SK-N-SH (cell line): ENCODE measurements at regions of chr19 and their contacts with region 1.

Region 1: GRCh38 chr19:2455851-2456570 is 748 bp downstream of the LMNB2 start:
- DNase-seq: peak; percentile 75
- H3K4me3 ChIP-seq: peak overlapping the region; percentile 80 to 83
- H3K27ac ChIP-seq: peak overlapping the region in 1 of 2 experiments; percentile 62; a peak in 1 of 4 replicates
- H3K4me1 ChIP-seq: peaks cover 8 to 10% of the 10 kb centered on the region in 2 experiments; a peak in 2 of 4 replicates
- H3K27me3 ChIP-seq: no peaks in the 10 kb centered on the region
- CTCF ChIP-seq: no peak
- EP300 ChIP-seq: no peak
- RAD21 ChIP-seq: no peak

Region 2: DNA sequence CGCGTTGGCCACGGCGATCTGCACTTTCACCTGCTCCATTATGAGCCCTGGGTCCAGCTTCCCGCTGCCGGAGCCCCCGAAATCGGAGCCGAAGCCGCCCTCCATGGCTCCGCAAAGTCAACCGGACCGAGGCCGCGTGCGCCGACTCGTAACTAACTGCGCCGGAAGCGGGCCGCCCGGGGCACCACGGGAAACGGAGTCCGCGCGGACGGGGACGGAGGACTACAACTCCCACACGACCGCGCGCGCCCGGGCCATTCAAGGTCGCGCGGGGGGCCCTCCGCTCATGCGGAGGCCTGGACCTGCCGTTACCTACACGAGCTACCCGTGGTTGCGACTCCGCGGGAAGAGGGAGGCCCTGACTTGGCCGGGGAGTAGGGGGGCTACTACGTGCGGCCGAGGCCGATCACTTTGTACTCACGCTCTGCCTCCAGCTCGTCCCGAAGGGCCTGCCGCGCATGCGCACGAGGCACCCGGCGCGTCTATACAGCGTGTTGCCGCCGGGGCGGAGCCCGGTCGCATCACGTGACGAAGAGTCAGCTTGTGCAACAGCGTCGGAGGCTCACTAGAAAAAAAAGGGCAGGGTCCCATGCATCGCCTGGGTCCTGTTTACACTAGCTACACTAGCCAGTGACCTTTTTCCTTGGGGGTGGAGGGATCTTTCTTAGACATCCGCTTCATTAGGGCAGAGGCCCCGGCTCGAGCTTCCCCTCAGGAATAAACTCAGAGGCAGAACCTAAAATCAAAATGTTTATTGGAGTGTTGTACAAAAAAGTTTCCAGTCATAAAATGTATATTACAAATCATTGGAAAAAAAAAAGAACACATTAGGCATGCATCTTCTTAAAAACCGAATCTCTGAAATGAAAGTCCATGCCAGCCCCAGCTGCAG is 28.3 kb before region 1 on chr19 and contains the start of gene TIMM13:
- CTCF ChIA-PET with region 1: no interaction called
- POLR2A ChIA-PET with region 1: interaction called, 18 read pairs
- DNase-seq: peak; percentile 97
- H3K4me3 ChIP-seq: peak within 1 kb of the TSS; percentile 97 to 99
- H3K27ac ChIP-seq: peak within 1 kb of the TSS; percentile 96 to 99
- H3K4me1 ChIP-seq: peaks cover 17 to 25% of the 10 kb centered on the region in 2 experiments; a peak in 2 of 4 replicates
- H3K27me3 ChIP-seq: no peaks in the 10 kb centered on the region
- CTCF ChIP-seq: no peak
- EP300 ChIP-seq: peak in 1 of 2 experiments; percentile 21; a peak in 1 of 4 replicates
- RAD21 ChIP-seq: no peak
- polyA plus RNA-seq, gene TIMM13: 76.0 and 76.9 TPM in 2 replicates

Region 3: GRCh38 chr19:2517868-2518625 is 62.0 kb after region 1 on chr19:
- CTCF ChIA-PET with region 1: no interaction called
- POLR2A ChIA-PET with region 1: no interaction called
- DNase-seq: no peak
- H3K4me3 ChIP-seq: no peak overlapping the region
- H3K27ac ChIP-seq: no peak overlapping the region
- H3K4me1 ChIP-seq: no peaks in the 10 kb centered on the region
- H3K27me3 ChIP-seq: no peaks in the 10 kb centered on the region
- CTCF ChIP-seq: no peak
- EP300 ChIP-seq: no peak
- RAD21 ChIP-seq: no peak